Right cardiac atrium (tissue), 5 donors: ENCODE measurements at regions of chr9 and their contacts with region 1.

Region 1: DNA sequence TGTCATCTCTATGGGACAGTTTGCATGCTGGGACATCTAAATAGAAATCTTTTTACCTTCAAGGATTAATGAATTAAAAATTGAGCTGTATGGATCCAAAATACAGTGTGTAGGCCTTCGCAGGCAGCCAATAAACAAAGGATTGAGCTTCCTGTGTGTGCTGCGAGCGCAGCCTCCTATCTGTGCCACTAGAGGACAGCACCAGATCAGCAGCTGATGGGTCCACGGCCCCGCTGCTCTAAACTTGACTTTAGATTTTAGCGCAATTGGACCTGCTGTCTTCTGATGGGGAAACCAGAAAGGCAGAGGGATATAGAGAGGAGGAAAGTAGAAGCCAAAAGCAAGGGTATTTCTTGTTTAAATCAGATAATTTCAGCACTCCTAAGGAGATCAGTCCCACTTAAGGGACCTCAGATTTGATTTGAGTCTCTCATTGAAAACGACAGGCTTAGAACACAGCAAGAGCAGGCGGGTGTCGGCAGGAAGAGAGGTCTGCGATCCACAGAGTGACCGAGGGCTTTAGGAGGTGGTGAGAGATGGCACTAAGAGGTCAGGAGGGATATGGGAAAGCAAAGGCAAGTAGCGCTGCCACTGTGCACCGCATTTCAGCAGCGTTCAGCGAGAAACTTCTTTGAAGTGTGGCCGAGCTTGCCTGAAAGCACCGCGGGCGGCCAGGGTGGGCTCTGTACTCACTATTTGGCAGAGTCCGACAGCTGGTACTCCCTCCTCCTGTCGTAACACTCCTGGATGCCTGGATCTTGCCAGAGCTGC is 214.3 kb downstream of the GNA14 start:
- DNase-seq: peak; percentile 66 to 86 (median 74)
- ATAC-seq: peak; percentile 71 to 81
- H3K4me3 ChIP-seq: no peak overlapping the region
- H3K27ac ChIP-seq: no peak overlapping the region
- H3K4me1 ChIP-seq: no peaks in the 10 kb centered on the region
- H3K27me3 ChIP-seq: no peaks in the 10 kb centered on the region

Region 2: GRCh38 chr9:77751341-77752091 is 317.7 kb after region 1 on chr9:
- intact Hi-C with region 1: loop called in 1 of 4 experiments (anchors 10 kb)
- DNase-seq: no peak
- ATAC-seq: peak; percentile 75 to 82
- H3K4me3 ChIP-seq: no peak overlapping the region
- H3K27ac ChIP-seq: no peak overlapping the region
- H3K4me1 ChIP-seq: no peaks in the 10 kb centered on the region
- H3K27me3 ChIP-seq: no peaks in the 10 kb centered on the region